Mammary epithelial cell (primary cell): ENCODE measurements at regions of chr7 and their contacts with region 1.

Region 1: DNA sequence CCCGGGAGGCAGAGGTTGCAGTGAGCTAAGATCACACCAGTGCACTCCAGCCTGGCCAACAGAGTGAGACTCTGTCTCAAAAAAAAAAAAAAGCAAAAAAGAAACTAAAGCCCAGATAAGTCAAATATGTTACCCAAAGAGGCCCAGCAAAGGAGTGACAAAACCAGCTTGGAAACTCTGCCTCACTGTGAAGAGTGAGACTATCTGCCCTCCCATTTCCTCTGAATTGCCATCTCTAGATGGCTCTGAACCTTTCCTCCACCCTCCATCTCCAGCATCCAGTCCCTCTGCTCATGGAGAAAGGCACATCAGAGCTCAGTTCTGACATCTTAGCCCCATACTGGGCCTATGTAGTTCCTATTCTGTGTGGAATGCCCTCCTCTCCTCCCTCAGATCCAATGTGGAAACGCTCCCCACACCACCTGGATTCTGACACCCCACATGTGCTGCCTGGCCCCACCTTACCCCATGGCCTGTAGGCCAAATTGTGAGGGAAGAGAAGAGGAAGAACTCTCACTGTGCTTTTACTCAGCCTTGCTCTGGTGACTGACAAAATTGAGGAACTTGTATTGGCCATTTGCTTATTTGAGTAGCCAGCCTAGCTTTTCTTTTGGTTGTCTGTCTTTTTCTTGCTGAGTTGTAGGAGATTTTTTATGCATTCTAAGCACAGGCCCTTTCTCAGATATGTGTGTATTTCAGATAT is 18.0 kb upstream of the NUDCD3 start:
- DNase-seq: no peak
- H3K4me3 ChIP-seq: no peak overlapping the region
- H3K27ac ChIP-seq: no peak overlapping the region
- H3K4me1 ChIP-seq: no peaks in the 10 kb centered on the region
- H3K27me3 ChIP-seq: no peaks in the 10 kb centered on the region
- CTCF ChIP-seq: no peak

Region 2: DNA sequence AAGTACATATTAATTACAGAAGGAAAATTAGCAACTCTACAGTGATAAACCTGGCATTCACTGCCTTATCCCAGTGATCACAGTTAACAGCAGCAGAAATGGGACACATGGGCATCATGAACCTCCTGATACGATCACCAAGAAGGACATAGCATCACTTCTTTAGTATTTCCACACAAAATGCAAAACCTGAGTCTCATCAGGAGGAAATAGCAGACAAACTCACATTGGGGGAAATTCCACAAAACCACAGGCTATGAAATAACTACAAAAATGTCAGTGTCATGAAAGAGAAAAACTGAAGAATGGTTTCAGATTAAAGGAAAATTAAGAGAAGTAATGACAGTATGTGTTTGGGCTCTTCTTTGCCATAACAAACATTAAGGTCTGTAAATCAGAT is 388.8 kb after region 1 on chr7:
- CTCF ChIA-PET with region 1: no interaction called
- dilution Hi-C with region 1: no loop called
- in situ Hi-C with region 1: no loop called
- intact Hi-C with region 1: no loop called
- DNase-seq: no peak
- H3K4me3 ChIP-seq: no peak overlapping the region
- H3K27ac ChIP-seq: no peak overlapping the region
- H3K4me1 ChIP-seq: no peaks in the 10 kb centered on the region
- H3K27me3 ChIP-seq: no peaks in the 10 kb centered on the region
- CTCF ChIP-seq: no peak

Region 3: GRCh38 chr7:45069444-45070253 is 561.2 kb after region 1 on chr7:
- CTCF ChIA-PET with region 1: no interaction called
- dilution Hi-C with region 1: no loop called
- in situ Hi-C with region 1: no loop called
- intact Hi-C with region 1: no loop called
- DNase-seq: no peak
- H3K4me3 ChIP-seq: no peak overlapping the region
- H3K27ac ChIP-seq: no peak overlapping the region
- H3K4me1 ChIP-seq: peaks cover 19% of the 10 kb centered on the region
- H3K27me3 ChIP-seq: no peaks in the 10 kb centered on the region
- CTCF ChIP-seq: no peak

Region 4: DNA sequence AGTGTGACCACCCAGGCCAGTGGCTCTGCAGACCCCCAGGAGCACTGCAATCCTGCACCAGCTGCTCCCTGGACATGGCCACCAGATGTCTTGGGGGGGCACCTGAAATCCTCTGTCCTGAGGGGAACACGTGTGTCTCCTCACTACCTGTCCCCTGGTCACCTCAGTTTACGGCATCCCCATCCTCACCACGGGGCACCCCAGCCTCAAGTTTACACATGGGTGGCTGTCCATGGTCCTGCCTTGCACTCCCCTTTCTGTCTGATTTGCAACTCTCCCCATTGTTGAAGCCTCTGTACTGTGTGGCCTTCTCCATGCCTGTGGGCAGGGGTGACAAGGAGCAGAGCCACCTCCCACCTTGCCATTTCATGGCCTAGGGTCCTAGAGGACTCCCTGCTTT is 716.4 kb after region 1 on chr7:
- CTCF ChIA-PET with region 1: no interaction called
- dilution Hi-C with region 1: no loop called
- in situ Hi-C with region 1: no loop called
- intact Hi-C with region 1: loop called (anchors 10 kb)
- DNase-seq: no peak
- H3K4me3 ChIP-seq: no peak overlapping the region
- H3K27ac ChIP-seq: no peak overlapping the region
- H3K4me1 ChIP-seq: no peaks in the 10 kb centered on the region
- H3K27me3 ChIP-seq: peaks cover 5% of the 10 kb centered on the region
- CTCF ChIP-seq: no peak